ENCODE measurements at regions of chr2 and their contacts with region 1.

Region 1: GRCh38 chr2:71299507-71299906 is 32.1 kb upstream of the ZNF638 start:
- DNase-seq: no peak
- H3K4me3 ChIP-seq: no peak overlapping the region
- CTCF ChIP-seq: peak; percentile 31

Region 2: GRCh38 chr2:71276311-71277146 is 23.0 kb before region 1 on chr2:
- CTCF ChIA-PET with region 1: interaction called, 25 read pairs
- POLR2A ChIA-PET with region 1: no interaction called
- DNase-seq: no peak
- H3K4me3 ChIP-seq: peak overlapping the region; percentile 71
- CTCF ChIP-seq: peak; percentile 21

Region 3: GRCh38 chr2:71282495-71282894 is 17.0 kb before region 1 on chr2:
- CTCF ChIA-PET with region 1: interaction called, 39 read pairs
- POLR2A ChIA-PET with region 1: no interaction called
- DNase-seq: no peak
- H3K4me3 ChIP-seq: no peak overlapping the region
- CTCF ChIP-seq: no peak

Region 4: GRCh38 chr2:71331581-71332434 is 32.3 kb after region 1 on chr2 and contains the start of gene ZNF638:
- CTCF ChIA-PET with region 1: interaction called, 44 read pairs
- POLR2A ChIA-PET with region 1: no interaction called
- DNase-seq: peak; percentile 16
- H3K4me3 ChIP-seq: peak within 1 kb of the TSS; percentile 99
- CTCF ChIP-seq: peak; percentile 62

Measured in AG04449 (cell line).